Sigmoid colon (tissue), 7 donors: ENCODE measurements at regions of chrX and their contacts with region 1.

Region 1: DNA sequence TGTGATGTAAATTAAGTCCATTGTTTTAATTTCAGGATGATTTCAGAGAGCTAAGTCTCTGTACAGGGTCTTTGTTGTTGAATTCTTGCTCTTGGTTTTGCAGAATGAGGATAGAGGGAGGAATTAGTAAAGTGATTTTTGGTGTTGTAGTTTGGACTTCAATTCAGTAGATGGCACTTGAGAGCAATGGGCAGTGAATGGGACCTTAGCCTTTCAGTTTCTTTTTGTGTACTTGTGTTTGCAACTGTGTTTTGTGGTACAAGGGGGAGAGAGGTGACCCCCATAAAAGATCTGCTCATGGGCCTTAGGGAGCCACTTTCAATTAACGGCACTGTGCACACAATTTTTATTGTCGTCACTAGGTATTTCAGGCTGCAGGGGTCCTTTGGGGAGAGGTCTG is 340.0 kb downstream of the DCAF12L2 start:
- DNase-seq: no peak
- H3K4me3 ChIP-seq: no peak overlapping the region
- H3K27ac ChIP-seq: no peak overlapping the region
- H3K4me1 ChIP-seq: no peaks in the 10 kb centered on the region
- H3K27me3 ChIP-seq: no peaks in the 10 kb centered on the region
- CTCF ChIP-seq: no peak
- EP300 ChIP-seq: no peak
- POLR2A ChIP-seq: no peak

Region 2: GRCh38 chrX:125977851-125978250 is 151.8 kb after region 1 on chrX:
- intact Hi-C with region 1: no loop called
- DNase-seq: no peak
- H3K4me3 ChIP-seq: no peak overlapping the region
- H3K27ac ChIP-seq: no peak overlapping the region
- H3K4me1 ChIP-seq: no peaks in the 10 kb centered on the region
- H3K27me3 ChIP-seq: no peaks in the 10 kb centered on the region
- CTCF ChIP-seq: no peak
- EP300 ChIP-seq: no peak
- POLR2A ChIP-seq: no peak

Region 3: GRCh38 chrX:127207326-127207725 is 1381.2 kb after region 1 on chrX:
- intact Hi-C with region 1: loop called (anchors 10 kb)
- DNase-seq: no peak
- H3K4me3 ChIP-seq: no peak overlapping the region
- H3K27ac ChIP-seq: no peak overlapping the region
- H3K4me1 ChIP-seq: no peaks in the 10 kb centered on the region
- H3K27me3 ChIP-seq: no peaks in the 10 kb centered on the region
- CTCF ChIP-seq: no peak
- EP300 ChIP-seq: no peak
- POLR2A ChIP-seq: no peak